ENCODE measurements at regions of chr14 and their contacts with region 1.

Region 1: GRCh38 chr14:21092273-21093011 is 6.0 kb downstream of the ZNF219 start:
- DNase-seq: peak in 1 of 2 donors; percentile 86
- H3K4me3 ChIP-seq: no peak overlapping the region
- H3K27ac ChIP-seq: peak overlapping the region; percentile 31
- H3K4me1 ChIP-seq: peaks cover 25% of the 10 kb centered on the region
- H3K27me3 ChIP-seq: no peaks in the 10 kb centered on the region
- CTCF ChIP-seq: peak; percentile 99 to 100 (median 100)
- POLR2A ChIP-seq: no peak

Region 2: DNA sequence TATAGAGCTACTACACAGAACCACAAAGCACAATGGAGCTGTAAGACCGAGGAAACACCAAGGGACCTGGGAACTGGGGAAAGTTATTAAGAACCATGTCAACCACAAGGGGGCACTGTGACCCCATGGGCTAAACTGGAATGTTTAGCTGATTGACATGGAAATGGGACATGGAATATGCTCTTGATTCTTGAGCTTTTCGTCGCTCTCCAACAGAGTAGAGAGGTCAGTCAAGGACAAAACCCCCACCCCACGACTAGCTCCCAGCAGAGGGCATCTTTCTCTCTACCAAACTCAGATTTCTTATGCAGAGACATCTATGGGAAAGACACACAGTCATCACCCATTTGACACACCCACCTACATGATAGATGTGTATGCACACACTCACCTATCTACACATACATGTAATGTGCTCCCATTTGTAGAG is 77.7 kb before region 1 on chr14:
- intact Hi-C with region 1: loop called (anchors 5 kb)
- DNase-seq: no peak
- H3K4me3 ChIP-seq: no peak overlapping the region
- H3K27ac ChIP-seq: peak overlapping the region; percentile 56
- H3K4me1 ChIP-seq: peaks cover 6% of the 10 kb centered on the region
- H3K27me3 ChIP-seq: no peaks in the 10 kb centered on the region
- CTCF ChIP-seq: peak; percentile 82 to 94 (median 89)
- POLR2A ChIP-seq: no peak

Region 3: DNA sequence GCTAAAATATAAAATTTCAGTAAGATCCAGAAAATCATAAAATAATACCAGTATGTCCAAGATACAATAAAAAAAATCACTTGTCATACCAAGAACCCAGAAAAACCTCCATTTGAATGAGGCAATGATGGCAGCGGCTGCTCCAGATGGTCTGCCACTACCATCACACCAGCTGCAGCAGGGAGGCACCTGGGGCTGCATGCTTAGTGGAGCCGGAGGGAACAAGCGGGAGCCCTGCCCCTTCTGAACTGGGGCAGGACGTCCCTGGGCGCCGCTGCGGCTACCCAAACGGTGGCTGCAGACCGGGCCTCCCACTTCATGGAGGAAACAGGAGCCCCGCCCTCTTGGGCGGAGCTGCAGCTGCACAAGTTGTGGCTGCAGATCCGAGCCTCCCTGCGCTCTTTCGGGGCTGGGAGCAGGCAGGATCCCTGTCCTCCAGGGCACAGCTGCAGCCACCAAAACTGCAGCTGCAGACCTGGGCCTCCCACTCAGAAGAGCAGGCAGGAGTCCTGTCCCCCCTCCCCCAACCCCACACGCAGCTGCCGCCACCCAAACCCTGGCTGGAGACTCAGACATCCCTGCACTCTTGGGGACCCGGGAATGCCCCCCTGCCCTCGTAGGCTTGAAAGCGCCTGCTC is 99.5 kb after region 1 on chr14:
- intact Hi-C with region 1: no loop called
- DNase-seq: no peak
- H3K4me3 ChIP-seq: peak overlapping the region; percentile 17 to 44
- H3K27ac ChIP-seq: no peak overlapping the region
- H3K4me1 ChIP-seq: peaks cover 6% of the 10 kb centered on the region
- H3K27me3 ChIP-seq: no peaks in the 10 kb centered on the region
- CTCF ChIP-seq: no peak
- POLR2A ChIP-seq: no peak

Measured in vagina (tissue), 2 donors.